Activated T-helper 2 cell treated with anti-CD3 and anti-CD28 coated beads, Interferon-gamma antibody, Interleukin-2, Interleukin-4, amounts not matched to agents 10 μg/mL and 5 μg/mL and 100 μg/mL, durations not matched to agents 14 hours and 24 hours and 36 hours (primary cell): ENCODE measurements at regions of chr11 and their contacts with region 1.

Region 1: GRCh38 chr11:96188243-96189006 is 154.6 kb downstream of the MAML2 start:
- DNase-seq: peak; percentile 16
- H3K4me3 Mint-ChIP-seq: peak overlapping the region; percentile 9
- H3K27ac Mint-ChIP-seq: peak overlapping the region; percentile 75
- H3K4me1 Mint-ChIP-seq: peaks cover 62% of the 10 kb centered on the region
- H3K27me3 Mint-ChIP-seq: no peaks in the 10 kb centered on the region

Region 2: DNA sequence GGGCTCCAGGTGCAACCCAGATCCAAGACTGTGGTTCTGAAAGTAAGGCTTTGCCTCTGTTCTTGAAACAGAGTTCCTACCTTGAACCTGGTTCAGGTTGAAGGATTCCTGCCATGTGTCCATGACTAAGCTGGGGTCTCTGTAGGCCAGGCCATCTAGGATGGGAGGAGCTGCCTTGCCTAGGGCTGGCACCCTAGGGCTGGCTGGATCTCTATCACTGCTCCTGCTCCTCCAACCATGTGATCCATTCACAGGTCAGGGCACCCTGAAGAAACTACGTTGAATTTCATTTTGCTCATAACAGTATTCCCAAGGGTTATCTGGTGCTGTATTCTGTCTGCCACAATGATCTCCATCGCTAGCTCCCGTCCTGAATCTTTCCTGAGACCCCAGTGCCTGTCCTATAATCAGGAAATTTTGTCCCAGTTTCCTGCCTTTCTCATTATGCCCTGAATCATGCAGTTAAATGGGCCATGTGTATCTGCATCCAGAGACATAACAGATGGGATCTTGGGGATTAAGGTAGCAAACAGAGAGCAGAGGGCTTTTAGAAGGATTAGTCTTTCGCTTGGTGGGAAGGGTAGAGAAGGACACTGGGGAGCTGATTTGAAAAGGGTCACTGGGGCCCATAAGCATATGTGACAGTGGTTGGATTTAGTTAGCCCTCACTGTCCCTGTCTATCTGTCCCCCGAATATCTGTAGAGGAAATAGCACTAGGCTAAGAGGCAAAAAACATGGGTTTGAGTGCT is 166.3 kb before region 1 on chr11:
- intact Hi-C with region 1: no loop called
- DNase-seq: no peak
- H3K4me3 Mint-ChIP-seq: no peak overlapping the region
- H3K27ac Mint-ChIP-seq: no peak overlapping the region
- H3K4me1 Mint-ChIP-seq: peaks cover 22% of the 10 kb centered on the region
- H3K27me3 Mint-ChIP-seq: no peaks in the 10 kb centered on the region

Region 3: GRCh38 chr11:96062134-96062533 is 126.3 kb before region 1 on chr11:
- intact Hi-C with region 1: loop called (anchors 2 kb)
- DNase-seq: no peak
- H3K4me3 Mint-ChIP-seq: peak overlapping the region; percentile 34
- H3K27ac Mint-ChIP-seq: peak overlapping the region; percentile 92
- H3K4me1 Mint-ChIP-seq: peaks cover 53% of the 10 kb centered on the region
- H3K27me3 Mint-ChIP-seq: no peaks in the 10 kb centered on the region

Region 4: GRCh38 chr11:96112201-96113128 is 76.0 kb before region 1 on chr11:
- intact Hi-C with region 1: loop called (anchors 1 kb)
- DNase-seq: no peak
- H3K4me3 Mint-ChIP-seq: peak overlapping the region; percentile 37
- H3K27ac Mint-ChIP-seq: peak overlapping the region; percentile 79
- H3K4me1 Mint-ChIP-seq: peaks cover 32% of the 10 kb centered on the region
- H3K27me3 Mint-ChIP-seq: no peaks in the 10 kb centered on the region

Region 5: GRCh38 chr11:96155627-96156378 is 32.6 kb before region 1 on chr11:
- intact Hi-C with region 1: loop called (anchors 1 kb)
- DNase-seq: peak; percentile 25
- H3K4me3 Mint-ChIP-seq: peak overlapping the region; percentile 43
- H3K27ac Mint-ChIP-seq: peak overlapping the region; percentile 96
- H3K4me1 Mint-ChIP-seq: peaks cover 49% of the 10 kb centered on the region
- H3K27me3 Mint-ChIP-seq: no peaks in the 10 kb centered on the region

Region 6: DNA sequence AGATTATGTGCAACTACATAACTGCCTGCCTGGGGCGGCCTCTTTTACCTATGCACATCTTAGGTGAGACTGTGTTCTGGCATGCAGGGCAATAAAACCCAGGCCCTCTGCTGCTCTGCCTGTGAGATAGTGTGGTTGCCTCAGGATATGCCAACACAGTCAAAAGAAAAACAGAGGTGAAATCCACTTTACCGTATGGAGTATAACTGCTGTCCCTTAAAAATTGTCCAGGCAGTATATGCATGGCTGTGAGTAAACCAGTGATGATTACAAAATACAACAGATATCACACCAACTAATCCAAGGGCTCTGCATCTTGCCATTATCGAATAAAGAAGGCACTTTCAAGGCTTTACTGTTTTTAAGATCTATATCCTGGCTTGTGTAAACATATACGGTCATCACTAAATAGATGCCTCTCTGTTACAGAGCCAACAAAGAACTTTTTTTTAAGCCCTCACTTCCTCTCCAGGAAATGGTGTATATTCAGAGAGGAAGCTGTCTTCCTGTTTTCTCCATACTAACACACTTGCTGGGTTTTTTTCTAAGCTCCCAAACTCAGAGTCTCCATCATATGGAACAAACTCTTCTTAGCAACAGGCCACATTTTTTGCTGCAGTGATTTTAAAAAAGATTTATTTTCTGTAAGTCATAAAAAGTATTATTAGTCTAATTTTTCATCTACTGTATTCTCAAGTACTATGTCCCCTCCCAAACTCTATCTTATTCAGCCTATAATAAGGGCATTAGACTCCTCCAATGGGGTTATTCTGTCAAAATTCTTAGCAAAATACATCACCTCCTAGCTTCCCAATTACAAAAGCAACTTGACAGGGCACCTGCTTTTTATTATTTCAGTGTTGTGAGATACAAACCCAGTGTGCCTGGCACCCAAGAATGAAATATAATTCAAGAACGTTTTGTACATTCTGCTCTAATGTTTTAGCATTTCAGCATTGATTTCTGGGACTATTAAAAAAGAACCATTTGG is 19.3 kb after region 1 on chr11:
- intact Hi-C with region 1: loop called (anchors 1 kb)
- DNase-seq: no peak
- H3K4me3 Mint-ChIP-seq: peak overlapping the region; percentile 48
- H3K27ac Mint-ChIP-seq: peak overlapping the region; percentile 85
- H3K4me1 Mint-ChIP-seq: peaks cover 76% of the 10 kb centered on the region
- H3K27me3 Mint-ChIP-seq: no peaks in the 10 kb centered on the region

Region 7: GRCh38 chr11:96235751-96236150 is 47.3 kb after region 1 on chr11:
- intact Hi-C with region 1: loop called (anchors 2 kb)
- DNase-seq: peak; percentile 52
- H3K4me3 Mint-ChIP-seq: peak overlapping the region; percentile 65
- H3K27ac Mint-ChIP-seq: peak overlapping the region; percentile 89
- H3K4me1 Mint-ChIP-seq: peaks cover 36% of the 10 kb centered on the region
- H3K27me3 Mint-ChIP-seq: no peaks in the 10 kb centered on the region

Region 8: GRCh38 chr11:96293598-96294021 is 105.2 kb after region 1 on chr11:
- intact Hi-C with region 1: loop called (anchors 5 kb)
- DNase-seq: no peak
- H3K4me3 Mint-ChIP-seq: peak overlapping the region; percentile 19
- H3K27ac Mint-ChIP-seq: peak overlapping the region; percentile 73
- H3K4me1 Mint-ChIP-seq: peaks cover 47% of the 10 kb centered on the region
- H3K27me3 Mint-ChIP-seq: no peaks in the 10 kb centered on the region